Psoas muscle (tissue), 8 donors: ENCODE measurements at regions of chr17 and their contacts with region 1.

Region 1: GRCh38 chr17:39244600-39245570 is 19.1 kb upstream of the STAC2 start:
- DNase-seq: peak; percentile 84 to 90
- ATAC-seq: peak; percentile 87 to 95 (median 94)
- H3K4me3 ChIP-seq: no peak overlapping the region
- H3K27ac ChIP-seq: no peak overlapping the region
- H3K4me1 ChIP-seq: peaks cover 4% of the 10 kb centered on the region
- H3K27me3 ChIP-seq: no peaks in the 10 kb centered on the region
- CTCF ChIP-seq: peak; percentile 98

Region 2: GRCh38 chr17:38702166-38702899 is 542.6 kb before region 1 on chr17:
- intact Hi-C with region 1: no loop called
- DNase-seq: peak; percentile 92 to 93
- ATAC-seq: peak; percentile 65 to 77 (median 68)
- H3K4me3 ChIP-seq: peak overlapping the region; percentile 97
- H3K27ac ChIP-seq: peak overlapping the region; percentile 98
- H3K4me1 ChIP-seq: peaks cover 30% of the 10 kb centered on the region
- H3K27me3 ChIP-seq: no peaks in the 10 kb centered on the region
- CTCF ChIP-seq: no peak

Region 3: DNA sequence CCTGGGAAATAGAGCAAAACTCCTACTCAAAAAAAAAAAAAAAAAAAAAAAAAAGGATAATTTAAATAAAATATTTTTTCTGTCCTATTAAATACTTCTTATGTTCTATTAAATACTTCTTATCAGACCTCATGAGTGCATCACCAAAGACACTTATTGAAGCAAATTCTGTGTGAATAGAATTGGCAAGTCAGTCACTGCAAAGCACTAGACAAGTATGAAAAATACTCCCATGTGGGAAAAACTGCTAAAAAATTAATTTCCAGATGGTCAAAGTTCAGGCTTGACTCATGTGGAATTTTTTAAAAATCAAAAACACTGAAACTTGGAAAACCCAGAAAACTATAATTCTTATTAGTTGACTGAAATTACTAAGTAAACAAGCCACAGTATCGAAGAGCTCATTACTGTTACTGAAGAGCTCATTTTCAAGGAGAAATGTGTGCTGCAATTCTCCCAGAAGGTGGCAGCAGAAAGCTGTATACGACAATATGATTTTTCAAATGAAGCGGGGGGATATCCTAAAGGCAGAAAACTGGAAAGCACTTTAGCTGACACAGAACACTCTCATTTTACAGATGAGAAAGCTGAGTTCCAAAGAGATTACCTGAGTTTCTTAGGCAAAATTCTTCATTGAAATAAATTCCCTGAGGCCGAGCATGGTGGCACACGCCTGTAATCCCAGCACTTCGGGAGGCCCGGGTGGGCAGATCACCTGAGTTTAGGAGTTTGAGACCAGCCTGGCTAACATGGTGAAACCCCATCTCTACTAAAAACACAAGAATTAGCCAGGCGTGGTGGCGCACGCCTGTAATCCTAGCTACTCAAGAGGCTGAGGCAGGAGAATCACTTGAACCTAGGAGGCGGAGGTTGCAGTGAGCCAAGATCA is 261.8 kb before region 1 on chr17:
- intact Hi-C with region 1: loop called (anchors 2 to 5 kb)
- DNase-seq: no peak
- ATAC-seq: peak in 3 of 4 donors; percentile 57 to 79 (median 68)
- H3K4me3 ChIP-seq: no peak overlapping the region
- H3K27ac ChIP-seq: no peak overlapping the region
- H3K4me1 ChIP-seq: no peaks in the 10 kb centered on the region
- H3K27me3 ChIP-seq: no peaks in the 10 kb centered on the region
- CTCF ChIP-seq: peak; percentile 76

Region 4: DNA sequence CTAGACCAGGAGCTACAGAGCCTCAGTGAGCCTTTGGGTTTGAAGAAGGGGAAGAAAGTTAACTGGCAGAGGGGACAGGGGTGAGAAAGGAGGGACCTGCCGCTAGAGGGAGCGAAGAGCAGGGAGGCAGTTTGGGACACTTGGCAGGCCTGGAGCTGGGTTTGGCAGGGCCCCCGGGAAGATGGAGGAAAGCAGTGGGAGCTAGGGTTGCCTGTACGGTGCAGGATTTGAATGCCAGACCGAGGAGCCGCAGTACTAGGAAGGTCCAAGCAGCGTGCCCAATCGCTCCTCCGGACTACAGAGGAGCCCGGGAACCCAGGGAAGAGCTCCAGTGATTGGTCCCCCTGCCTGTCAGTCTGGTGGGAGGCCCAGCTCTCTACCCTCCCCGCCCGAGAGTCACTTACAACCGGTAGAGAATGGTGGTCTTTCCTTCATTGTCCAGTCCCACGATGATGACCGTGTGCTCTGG is 80.2 kb before region 1 on chr17:
- intact Hi-C with region 1: loop called in 1 of 2 experiments (anchors 1 kb)
- DNase-seq: peak; percentile 93 to 96
- ATAC-seq: peak; percentile 84 to 91 (median 89)
- H3K4me3 ChIP-seq: peak overlapping the region; percentile 65
- H3K27ac ChIP-seq: no peak overlapping the region
- H3K4me1 ChIP-seq: peaks cover 9% of the 10 kb centered on the region
- H3K27me3 ChIP-seq: no peaks in the 10 kb centered on the region
- CTCF ChIP-seq: peak; percentile 79

Region 5: DNA sequence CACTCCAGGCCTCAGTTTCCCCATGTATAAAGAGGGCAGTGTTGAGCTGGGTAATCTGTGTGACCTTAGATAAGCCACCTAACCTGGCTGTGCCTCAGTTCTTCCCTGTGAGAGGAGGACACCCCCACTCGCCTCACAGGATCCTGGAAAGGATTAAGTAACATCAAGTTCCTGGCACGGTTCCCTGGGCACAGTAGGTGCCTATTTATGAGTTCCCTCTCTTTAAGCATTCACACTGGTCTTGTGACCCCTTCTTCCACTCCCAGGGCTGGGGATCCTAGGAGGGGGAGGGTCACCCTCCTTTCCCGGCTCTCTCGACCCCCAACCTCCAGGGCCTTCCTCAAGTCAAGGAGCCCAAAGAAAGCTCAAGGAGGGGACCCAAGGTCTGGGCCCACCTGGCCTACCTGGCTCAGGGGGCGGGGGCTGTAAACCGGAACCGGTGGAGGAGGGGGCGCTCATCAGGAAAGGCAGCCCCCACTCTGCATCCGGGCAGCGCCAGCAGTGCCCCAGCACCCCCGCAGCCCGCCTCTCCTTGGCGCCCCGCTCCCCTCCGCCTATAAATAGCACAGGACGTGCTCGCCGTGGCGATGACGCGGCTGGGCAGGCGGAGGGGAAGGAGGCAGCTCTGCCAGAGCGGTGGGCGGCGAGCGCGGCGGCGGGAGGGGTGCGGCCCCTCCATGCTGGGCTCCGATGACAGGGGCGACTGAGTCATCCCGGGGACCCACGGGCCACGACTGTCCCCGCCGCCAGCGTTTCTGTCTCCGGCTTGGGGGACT is 35.4 kb before region 1 on chr17:
- intact Hi-C with region 1: loop called (anchors 1 to 5 kb)
- DNase-seq: peak; percentile 85 to 93
- ATAC-seq: peak; percentile 76 to 87 (median 80)
- H3K4me3 ChIP-seq: peak overlapping the region; percentile 65
- H3K27ac ChIP-seq: peak overlapping the region; percentile 80
- H3K4me1 ChIP-seq: peaks cover 21% of the 10 kb centered on the region
- H3K27me3 ChIP-seq: no peaks in the 10 kb centered on the region
- CTCF ChIP-seq: no peak